Activated CD8-positive, alpha-beta T cell treated with anti-CD3 and anti-CD28 coated beads for 36 hours (primary cell): ENCODE measurements at regions of chr14 and their contacts with region 1.

Region 1: GRCh38 chr14:24431569-24432258 is 2.0 kb downstream of the KHNYN start:
- DNase-seq: peak; percentile 95
- ATAC-seq: peak; percentile 65
- H3K4me3 Mint-ChIP-seq: peak overlapping the region; percentile 90
- H3K27ac Mint-ChIP-seq: peak overlapping the region; percentile 97
- H3K4me1 Mint-ChIP-seq: peaks cover 31% of the 10 kb centered on the region
- H3K27me3 Mint-ChIP-seq: no peaks in the 10 kb centered on the region
- CTCF ChIP-seq: peak; percentile 87

Region 2: DNA sequence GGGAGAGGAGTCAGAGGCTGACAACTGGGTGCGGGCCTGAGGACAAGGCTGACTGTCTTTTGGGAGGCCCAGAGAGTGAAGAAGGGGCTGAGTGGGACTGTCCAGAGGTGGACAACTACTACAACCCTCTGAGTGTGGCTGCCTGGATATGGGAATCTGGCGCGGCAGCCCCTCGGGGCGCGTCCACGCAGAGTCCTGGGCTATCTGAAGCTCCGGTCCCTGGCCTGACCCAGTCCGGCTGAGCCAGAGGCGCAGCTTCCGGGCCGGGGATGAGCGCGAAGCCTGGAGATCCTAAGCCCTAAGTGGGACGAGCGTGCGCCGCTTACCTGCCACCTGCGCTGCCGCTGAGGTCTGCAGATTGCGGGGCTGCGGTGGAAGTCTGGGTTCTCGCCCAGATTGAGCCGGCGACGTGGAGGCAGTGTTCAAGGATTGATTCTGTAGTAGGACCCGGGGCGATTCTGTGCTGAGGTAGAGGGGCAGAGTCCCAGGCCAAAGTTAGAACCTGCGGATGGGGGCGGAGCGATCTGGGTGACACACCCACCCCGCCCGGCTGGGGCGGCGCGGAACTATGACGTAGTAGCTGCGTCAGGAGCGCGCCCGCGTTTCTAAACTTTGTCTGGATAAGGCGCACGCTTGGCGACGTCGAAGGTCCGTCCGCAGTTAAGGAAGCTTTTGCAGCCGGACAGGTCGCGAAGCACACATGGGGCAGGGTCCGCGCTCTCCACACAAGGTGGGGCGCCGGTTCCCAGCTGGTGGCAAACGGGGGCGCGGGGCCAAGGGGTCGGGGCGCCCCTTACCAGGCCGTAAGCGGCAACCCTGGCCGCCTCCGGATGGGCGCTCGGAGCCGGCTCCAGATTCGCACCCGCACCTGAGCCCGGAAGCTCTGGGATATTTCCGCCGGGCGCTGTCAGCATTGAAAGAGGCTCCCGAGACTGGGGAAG is 132.2 kb before region 1 on chr14 and contains the starts of genes DHRS1 and NOP9:
- CTCF ChIA-PET with region 1: interaction called, 11 read pairs
- POLR2A ChIA-PET with region 1: no interaction called
- intact Hi-C with region 1: no loop called
- DNase-seq: peak; percentile 94
- ATAC-seq: peak; percentile 76
- H3K4me3 Mint-ChIP-seq: peak within 1 kb of the TSS; percentile 89
- H3K27ac Mint-ChIP-seq: peak within 1 kb of the TSS; percentile 88
- H3K4me1 Mint-ChIP-seq: peaks cover 40% of the 10 kb centered on the region
- H3K27me3 Mint-ChIP-seq: no peaks in the 10 kb centered on the region
- CTCF ChIP-seq: no peak
- total RNA-seq, gene DHRS1: 11.9 to 13.6 TPM
- total RNA-seq, gene NOP9: 33.5 to 33.6 TPM

Region 3: GRCh38 chr14:24332268-24332993 is 99.3 kb before region 1 on chr14:
- CTCF ChIA-PET with region 1: interaction called, 454 read pairs
- POLR2A ChIA-PET with region 1: interaction called, 82 read pairs
- intact Hi-C with region 1: loop called (anchors 1 kb)
- DNase-seq: peak; percentile 93
- ATAC-seq: peak; percentile 87
- H3K4me3 Mint-ChIP-seq: peak overlapping the region; percentile 68
- H3K27ac Mint-ChIP-seq: no peak overlapping the region
- H3K4me1 Mint-ChIP-seq: peaks cover 43% of the 10 kb centered on the region
- H3K27me3 Mint-ChIP-seq: peaks cover 29% of the 10 kb centered on the region
- CTCF ChIP-seq: peak; percentile 82

Region 4: DNA sequence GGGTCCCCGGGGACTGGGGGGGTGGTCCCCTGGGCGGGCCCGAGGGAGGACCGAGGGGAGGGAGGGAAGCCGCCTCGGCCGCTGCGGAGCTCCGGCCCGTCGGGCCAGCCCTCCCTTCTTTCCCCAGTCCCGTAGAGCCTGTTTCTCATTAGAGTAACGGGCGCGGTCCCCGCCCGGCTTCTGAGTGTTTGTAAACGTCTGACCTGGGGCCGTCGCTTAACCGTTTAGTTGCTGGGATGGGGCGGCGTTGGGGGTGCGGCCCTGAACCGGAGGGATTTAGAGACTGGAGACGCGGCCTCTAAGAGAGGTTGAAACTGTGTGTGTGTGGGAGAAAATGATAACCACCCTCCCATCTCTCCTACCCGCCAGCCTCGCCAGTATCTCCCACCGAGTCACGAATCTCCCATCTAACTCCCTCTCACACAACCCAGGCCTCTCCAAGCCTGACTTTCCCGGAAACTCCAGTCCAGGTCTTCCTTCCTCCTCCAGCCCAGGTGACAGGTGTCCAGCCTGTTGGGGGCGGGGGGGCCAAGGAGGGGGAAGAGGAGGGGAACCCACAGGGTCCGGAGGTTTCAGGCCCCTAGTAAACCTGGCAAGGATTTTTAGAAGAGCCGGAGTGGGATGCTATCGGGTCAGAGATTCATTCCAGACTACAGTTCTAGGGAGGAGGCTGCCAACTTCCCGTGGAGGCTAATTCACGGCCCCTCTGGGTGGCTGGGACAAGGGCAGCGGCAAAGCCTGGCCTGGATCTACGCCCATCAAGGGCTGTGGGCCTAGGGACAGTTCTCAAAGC is 64.8 kb before region 1 on chr14:
- CTCF ChIA-PET with region 1: interaction called, 73 read pairs
- POLR2A ChIA-PET with region 1: interaction called, 19 read pairs
- intact Hi-C with region 1: loop called (anchors 5 kb)
- DNase-seq: peak; percentile 57
- ATAC-seq: peak; percentile 14
- H3K4me3 Mint-ChIP-seq: peak overlapping the region; percentile 61
- H3K27ac Mint-ChIP-seq: no peak overlapping the region
- H3K4me1 Mint-ChIP-seq: peaks cover 32% of the 10 kb centered on the region
- H3K27me3 Mint-ChIP-seq: peaks cover 40% of the 10 kb centered on the region
- CTCF ChIP-seq: no peak

Region 5: DNA sequence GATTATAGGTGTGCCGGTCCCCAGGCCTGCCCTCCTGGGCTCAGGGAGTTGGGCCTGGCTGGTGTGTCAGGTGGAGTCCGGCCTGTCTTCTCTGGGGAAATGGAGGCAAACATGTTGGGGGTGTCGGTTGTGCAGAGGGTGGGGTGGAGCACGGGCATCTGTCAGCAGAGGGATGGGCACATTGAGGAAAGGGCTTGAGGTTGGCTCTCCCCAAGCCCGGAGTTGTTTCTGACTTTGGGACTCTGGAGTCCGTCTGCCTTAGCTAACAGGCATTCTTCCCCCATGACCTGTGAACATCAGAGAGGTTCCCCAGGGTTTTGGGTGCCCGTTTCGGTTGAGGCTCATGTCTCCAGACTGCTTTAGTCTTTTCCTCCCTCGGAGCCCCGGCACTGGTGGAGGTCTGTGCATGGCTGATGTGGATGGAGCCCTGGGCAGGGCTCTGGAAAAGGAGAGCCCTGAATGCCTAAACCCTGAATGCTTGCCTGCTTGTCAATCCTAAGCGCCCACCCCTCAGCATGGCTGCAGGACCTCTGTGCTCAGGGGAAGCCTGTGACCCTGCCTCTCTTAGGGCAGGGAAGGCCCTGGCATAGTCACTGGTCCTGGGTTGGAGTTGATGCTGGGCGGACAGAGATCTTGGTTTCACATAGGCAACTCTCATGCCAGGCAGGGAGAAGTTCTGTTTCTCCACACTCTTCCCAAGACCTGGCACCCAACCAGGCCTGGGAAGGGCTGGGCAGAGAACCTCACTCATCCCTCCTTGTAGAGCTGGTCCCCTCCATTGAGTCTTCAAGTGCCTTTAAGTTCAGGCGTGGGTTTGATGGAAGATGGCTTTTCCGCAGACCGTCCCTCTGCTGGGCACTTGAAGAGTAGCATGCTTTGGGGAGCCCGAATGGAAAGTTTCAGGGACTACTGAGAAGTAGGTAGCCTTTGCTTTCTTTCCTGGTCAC is 20.0 kb before region 1 on chr14:
- CTCF ChIA-PET with region 1: interaction called, 25 read pairs
- POLR2A ChIA-PET with region 1: interaction called, 4 read pairs
- intact Hi-C with region 1: no loop called
- DNase-seq: peak; percentile 49
- ATAC-seq: peak; percentile 87
- H3K4me3 Mint-ChIP-seq: no peak overlapping the region
- H3K27ac Mint-ChIP-seq: no peak overlapping the region
- H3K4me1 Mint-ChIP-seq: no peaks in the 10 kb centered on the region
- H3K27me3 Mint-ChIP-seq: no peaks in the 10 kb centered on the region
- CTCF ChIP-seq: peak; percentile 57